Activated B cell treated with CpG ODN at 0.5 μM for 24 hours (primary cell): ENCODE measurements at regions of chr13 and their contacts with region 1.

Region 1: DNA sequence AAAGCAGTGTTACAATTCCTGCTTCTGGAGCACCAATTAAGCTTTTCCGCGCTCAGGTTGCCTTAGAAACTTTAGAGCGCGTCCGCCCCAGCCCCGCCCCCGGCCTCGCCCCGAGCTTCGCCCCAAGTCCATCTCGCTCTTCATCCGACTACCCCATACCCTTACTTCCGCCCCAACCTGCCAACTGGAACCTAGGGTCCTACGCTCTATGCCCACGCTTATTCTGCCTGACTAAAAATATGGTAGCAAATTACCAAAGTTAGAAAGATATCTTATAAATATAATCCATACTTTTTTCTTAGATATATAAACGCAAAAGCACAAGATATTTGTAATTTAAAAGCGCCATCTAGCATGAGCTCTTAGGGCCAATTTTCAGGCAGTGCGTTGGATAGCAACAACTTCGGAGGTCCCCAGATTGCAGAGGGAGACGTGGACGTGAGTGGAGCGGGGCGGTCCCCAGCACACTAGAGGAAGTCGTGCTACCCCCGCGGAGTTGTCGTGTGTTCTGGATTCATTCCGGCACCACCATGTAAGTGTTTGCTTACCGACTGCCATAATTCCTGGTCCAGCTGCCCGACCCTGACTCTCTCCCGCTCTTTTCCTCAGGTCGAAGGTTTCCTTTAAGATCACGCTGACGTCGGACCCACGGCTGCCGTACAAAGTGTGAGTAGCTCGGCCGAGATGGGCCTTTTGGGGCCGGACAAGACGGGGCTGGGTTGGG is at the start of gene UFM1:
- DNase-seq: peak; percentile 76
- ATAC-seq: peak; percentile 95
- H3K4me3 Mint-ChIP-seq: peak within 1 kb of the TSS; percentile 98
- H3K27ac Mint-ChIP-seq: peak within 1 kb of the TSS; percentile 97
- H3K4me1 Mint-ChIP-seq: peaks cover 33% of the 10 kb centered on the region
- H3K27me3 Mint-ChIP-seq: no peaks in the 10 kb centered on the region
- CTCF ChIP-seq: no peak
- total RNA-seq, gene UFM1: 49.4 and 55.7 TPM in 2 replicates

Region 2: GRCh38 chr13:36818804-36819738 is 1530.5 kb before region 1 on chr13 and contains the start of gene RFXAP:
- CTCF ChIA-PET with region 1: no interaction called
- POLR2A ChIA-PET with region 1: no interaction called
- intact Hi-C with region 1: loop called (anchors 2 kb)
- DNase-seq: peak; percentile 93
- ATAC-seq: peak; percentile 94
- H3K4me3 Mint-ChIP-seq: peak within 1 kb of the TSS; percentile 93
- H3K27ac Mint-ChIP-seq: peak within 1 kb of the TSS; percentile 90
- H3K4me1 Mint-ChIP-seq: peaks cover 44% of the 10 kb centered on the region
- H3K27me3 Mint-ChIP-seq: peaks cover 6% of the 10 kb centered on the region
- CTCF ChIP-seq: no peak
- total RNA-seq, gene RFXAP: 8.8 and 9.6 TPM in 2 replicates

Region 3: DNA sequence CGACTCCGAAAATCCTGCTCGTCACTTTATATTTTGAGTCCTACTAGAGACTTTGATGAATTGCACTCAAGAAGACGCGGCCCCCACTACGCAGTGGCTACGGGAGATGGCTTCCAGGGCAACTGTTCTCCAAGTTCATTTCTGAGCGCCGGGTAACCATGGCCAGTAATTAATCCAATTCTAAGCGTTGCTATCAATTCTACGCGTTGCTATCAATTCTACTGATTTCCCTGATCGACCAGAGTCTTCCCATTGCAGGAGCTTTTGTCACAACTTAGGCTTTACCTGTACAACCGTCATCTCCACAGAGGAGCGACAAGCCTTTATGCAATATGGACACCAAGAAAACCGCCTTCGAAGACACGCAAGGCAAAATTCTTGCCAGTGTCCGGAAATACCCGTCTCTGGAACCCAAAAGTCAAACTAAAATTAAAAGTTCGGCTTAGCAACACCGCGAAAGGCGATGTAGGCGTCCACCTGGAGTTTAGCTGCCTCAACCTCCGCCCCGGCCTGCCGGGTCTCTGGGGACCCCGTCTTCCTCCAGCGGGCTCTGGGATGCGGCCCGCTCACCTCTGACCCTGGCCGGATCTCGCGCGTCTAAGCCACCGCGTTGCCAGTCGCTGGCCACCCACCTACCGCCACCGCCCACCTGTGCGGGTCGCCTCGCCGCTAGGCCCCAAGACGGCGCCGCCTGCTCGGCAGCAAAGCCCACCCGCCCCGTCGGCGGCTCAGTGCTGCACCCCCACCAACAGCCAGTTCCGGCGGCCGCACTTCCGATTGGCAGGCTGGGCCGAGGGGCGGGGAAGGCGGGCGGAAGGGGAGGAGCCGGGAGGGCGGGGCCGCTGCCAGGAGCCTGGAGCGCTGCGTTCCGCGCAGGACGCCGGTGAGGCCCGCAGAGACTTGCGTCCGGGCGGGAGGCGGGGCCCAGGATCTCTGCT is 1290.4 kb before region 1 on chr13 and contains the start of gene SUPT20H:
- CTCF ChIA-PET with region 1: no interaction called
- POLR2A ChIA-PET with region 1: interaction called, 4 read pairs
- intact Hi-C with region 1: loop called (anchors 1 kb)
- DNase-seq: peak; percentile 92
- ATAC-seq: peak; percentile 94
- H3K4me3 Mint-ChIP-seq: peak within 1 kb of the TSS; percentile 96
- H3K27ac Mint-ChIP-seq: peak within 1 kb of the TSS; percentile 97
- H3K4me1 Mint-ChIP-seq: peaks cover 29% of the 10 kb centered on the region
- H3K27me3 Mint-ChIP-seq: no peaks in the 10 kb centered on the region
- CTCF ChIP-seq: no peak
- total RNA-seq, gene SUPT20H: 61.9 and 66.6 TPM in 2 replicates

Region 4: DNA sequence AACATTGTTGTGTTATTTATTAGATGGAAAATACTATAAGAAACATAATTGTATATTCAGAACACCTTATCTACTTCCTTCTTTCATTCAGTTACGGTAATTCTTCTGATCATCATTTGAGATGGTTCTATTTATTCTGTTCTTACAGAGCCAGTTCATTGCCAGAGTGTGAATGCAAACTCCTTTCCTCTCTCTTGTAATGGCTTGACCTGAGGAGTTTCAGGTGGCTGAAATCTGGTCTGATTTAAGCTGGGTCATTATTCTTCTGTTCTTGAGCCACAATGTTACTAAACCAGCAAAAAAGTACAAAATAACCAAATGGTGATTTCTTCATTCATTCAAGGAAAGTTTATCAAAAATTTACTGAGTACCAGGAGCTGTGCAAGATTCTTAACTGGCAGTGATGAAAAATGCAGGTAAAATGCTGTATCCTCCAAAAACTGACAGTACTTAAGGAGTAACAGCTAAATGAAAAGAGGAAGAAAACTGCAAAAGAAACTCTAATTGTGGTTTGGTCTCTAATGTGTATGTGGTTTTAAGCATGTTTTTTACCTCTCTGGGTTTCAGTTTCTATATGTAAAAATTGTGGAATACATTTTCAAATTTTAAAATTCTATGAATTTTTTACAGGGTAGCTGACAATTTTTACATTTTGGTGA is 182.3 kb before region 1 on chr13:
- CTCF ChIA-PET with region 1: no interaction called
- POLR2A ChIA-PET with region 1: no interaction called
- intact Hi-C with region 1: loop called (anchors 5 kb)
- DNase-seq: no peak
- ATAC-seq: peak; percentile 42
- H3K4me3 Mint-ChIP-seq: peak overlapping the region; percentile 40
- H3K27ac Mint-ChIP-seq: peak overlapping the region; percentile 36
- H3K4me1 Mint-ChIP-seq: peaks cover 10% of the 10 kb centered on the region
- H3K27me3 Mint-ChIP-seq: no peaks in the 10 kb centered on the region
- CTCF ChIP-seq: no peak

Region 5: GRCh38 chr13:38316129-38316528 is 33.4 kb before region 1 on chr13:
- CTCF ChIA-PET with region 1: no interaction called
- POLR2A ChIA-PET with region 1: no interaction called
- intact Hi-C with region 1: no loop called
- DNase-seq: no peak
- ATAC-seq: no peak
- H3K4me3 Mint-ChIP-seq: no peak overlapping the region
- H3K27ac Mint-ChIP-seq: no peak overlapping the region
- H3K4me1 Mint-ChIP-seq: no peaks in the 10 kb centered on the region
- H3K27me3 Mint-ChIP-seq: no peaks in the 10 kb centered on the region
- CTCF ChIP-seq: no peak

Region 6: GRCh38 chr13:39037880-39038568 is 688.5 kb after region 1 on chr13 and contains the starts of genes NHLRC3 and PROSER1:
- CTCF ChIA-PET with region 1: no interaction called
- POLR2A ChIA-PET with region 1: interaction called, 11 read pairs
- intact Hi-C with region 1: loop called (anchors 1 kb)
- DNase-seq: peak; percentile 73
- ATAC-seq: peak; percentile 78
- H3K4me3 Mint-ChIP-seq: peak within 1 kb of the TSS; percentile 87
- H3K27ac Mint-ChIP-seq: peak within 1 kb of the TSS; percentile 99
- H3K4me1 Mint-ChIP-seq: peaks cover 47% of the 10 kb centered on the region
- H3K27me3 Mint-ChIP-seq: no peaks in the 10 kb centered on the region
- CTCF ChIP-seq: no peak
- total RNA-seq, gene NHLRC3: 17.3 and 24.6 TPM in 2 replicates
- total RNA-seq, gene PROSER1: 57.3 and 57.8 TPM in 2 replicates

Region 7: DNA sequence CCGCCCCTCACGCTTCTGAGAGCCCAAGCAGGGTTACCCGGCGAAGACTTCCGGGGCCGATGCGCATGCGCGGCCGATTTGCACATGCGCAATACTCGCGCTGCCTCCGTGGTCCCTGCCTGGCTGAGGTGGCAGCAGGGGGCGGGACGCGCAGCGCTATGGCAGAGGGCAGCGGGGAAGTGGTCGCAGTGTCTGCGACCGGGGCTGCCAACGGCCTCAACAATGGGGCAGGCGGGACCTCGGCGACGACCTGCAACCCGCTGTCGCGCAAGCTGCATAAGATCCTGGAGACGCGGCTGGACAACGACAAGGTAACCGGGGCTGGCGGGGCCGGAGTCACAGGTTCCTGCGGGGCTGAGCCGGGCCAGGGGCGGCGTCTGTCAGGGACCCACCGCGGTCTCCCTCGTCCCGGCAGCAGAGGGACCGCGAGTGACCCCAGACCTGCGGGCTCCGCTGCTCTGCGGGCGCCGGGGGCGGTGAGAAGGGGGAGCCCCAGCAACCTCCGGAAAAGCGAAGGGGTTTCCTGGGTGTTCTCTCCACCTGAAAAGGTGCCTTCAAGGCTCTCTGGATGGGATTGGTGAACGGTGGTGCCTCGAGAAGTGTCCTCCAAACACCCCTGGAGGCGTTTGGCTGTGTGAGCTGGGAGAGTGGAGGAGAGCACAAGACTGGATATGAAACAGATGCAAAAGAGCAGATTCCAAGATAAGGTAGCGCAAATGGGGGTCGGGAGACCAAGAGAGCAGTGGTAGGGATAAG is 1306.2 kb after region 1 on chr13 and contains the start of gene COG6:
- CTCF ChIA-PET with region 1: no interaction called
- POLR2A ChIA-PET with region 1: no interaction called
- intact Hi-C with region 1: loop called (anchors 10 kb)
- DNase-seq: peak; percentile 99
- ATAC-seq: peak; percentile 91
- H3K4me3 Mint-ChIP-seq: peak within 1 kb of the TSS; percentile 91
- H3K27ac Mint-ChIP-seq: peak within 1 kb of the TSS; percentile 85
- H3K4me1 Mint-ChIP-seq: peaks cover 26% of the 10 kb centered on the region
- H3K27me3 Mint-ChIP-seq: peaks cover 2% of the 10 kb centered on the region
- CTCF ChIP-seq: no peak
- total RNA-seq, gene COG6: 28.9 and 29.6 TPM in 2 replicates